Endothelial cell of umbilical vein (primary cell): ENCODE measurements at regions of chr9 and their contacts with region 1.

Region 1: GRCh38 chr9:77884395-77884851 is 147.2 kb downstream of the GNAQ start:
- DNase-seq: no peak
- H3K4me3 ChIP-seq: no peak overlapping the region
- H3K27ac ChIP-seq: no peak overlapping the region
- H3K4me1 ChIP-seq: peaks cover 4% of the 10 kb centered on the region
- H3K27me3 ChIP-seq: no peaks in the 10 kb centered on the region
- CTCF ChIP-seq: no peak
- POLR2A ChIP-seq: no peak

Region 2: DNA sequence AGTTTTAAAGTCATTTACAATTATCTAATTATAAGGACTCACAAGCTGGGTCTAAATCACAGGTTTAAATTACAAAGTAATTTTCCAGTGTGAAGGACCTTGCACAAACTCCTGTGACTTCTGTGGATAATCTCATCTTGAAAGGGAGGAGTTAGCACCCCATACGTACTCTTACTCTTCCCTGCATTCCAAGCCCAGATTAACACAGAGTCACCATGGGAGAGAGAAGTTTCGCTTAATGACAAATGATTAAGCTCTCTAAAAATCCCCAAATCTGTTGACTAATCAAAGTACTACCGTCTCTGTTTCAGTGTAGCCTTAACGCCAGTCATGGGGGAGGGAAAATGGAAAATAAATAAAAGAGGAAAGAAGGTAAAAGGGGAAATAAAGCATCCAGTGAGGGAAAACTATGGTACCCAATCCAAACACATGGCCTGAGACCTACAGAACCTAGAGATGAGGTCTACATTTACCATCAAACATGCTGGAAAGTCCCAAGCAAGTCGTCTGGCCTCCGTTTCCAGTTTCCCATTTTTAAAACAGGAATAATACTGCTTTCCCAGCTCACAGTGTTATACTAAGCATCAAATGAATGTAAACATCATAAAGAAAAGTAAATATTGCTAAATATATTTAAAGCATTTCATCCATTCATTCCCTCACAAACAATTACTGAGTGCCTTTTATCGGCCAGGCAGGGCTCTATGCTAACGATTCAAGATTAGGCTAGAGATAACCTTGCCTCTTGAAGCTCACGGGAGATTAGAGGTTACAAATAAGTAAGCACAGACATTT is 1056.9 kb before region 1 on chr9:
- CTCF ChIA-PET with region 1: no interaction called
- POLR2A ChIA-PET with region 1: no interaction called
- dilution Hi-C with region 1: no loop called
- intact Hi-C with region 1: no loop called
- DNase-seq: no peak
- H3K4me3 ChIP-seq: no peak overlapping the region
- H3K27ac ChIP-seq: no peak overlapping the region
- H3K4me1 ChIP-seq: no peaks in the 10 kb centered on the region
- H3K27me3 ChIP-seq: peaks cover 2 to 3% of the 10 kb centered on the region in 2 experiments
- CTCF ChIP-seq: no peak
- POLR2A ChIP-seq: no peak

Region 3: GRCh38 chr9:77769246-77769645 is 115.2 kb before region 1 on chr9:
- CTCF ChIA-PET with region 1: no interaction called
- POLR2A ChIA-PET with region 1: no interaction called
- dilution Hi-C with region 1: no loop called
- intact Hi-C with region 1: no loop called
- DNase-seq: peak; percentile 80
- H3K4me3 ChIP-seq: no peak overlapping the region
- H3K27ac ChIP-seq: peak overlapping the region; percentile 54
- H3K4me1 ChIP-seq: peaks cover 17% of the 10 kb centered on the region
- H3K27me3 ChIP-seq: no peaks in the 10 kb centered on the region
- CTCF ChIP-seq: no peak
- POLR2A ChIP-seq: no peak

Region 4: GRCh38 chr9:77896938-77897667 is 12.7 kb after region 1 on chr9:
- CTCF ChIA-PET with region 1: interaction called, 15 read pairs
- POLR2A ChIA-PET with region 1: no interaction called
- dilution Hi-C with region 1: no loop called
- intact Hi-C with region 1: no loop called
- DNase-seq: peak; percentile 52
- H3K4me3 ChIP-seq: no peak overlapping the region
- H3K27ac ChIP-seq: no peak overlapping the region
- H3K4me1 ChIP-seq: peaks cover 12% of the 10 kb centered on the region
- H3K27me3 ChIP-seq: no peaks in the 10 kb centered on the region
- CTCF ChIP-seq: peak; percentile 18 to 40
- POLR2A ChIP-seq: no peak

Region 5: DNA sequence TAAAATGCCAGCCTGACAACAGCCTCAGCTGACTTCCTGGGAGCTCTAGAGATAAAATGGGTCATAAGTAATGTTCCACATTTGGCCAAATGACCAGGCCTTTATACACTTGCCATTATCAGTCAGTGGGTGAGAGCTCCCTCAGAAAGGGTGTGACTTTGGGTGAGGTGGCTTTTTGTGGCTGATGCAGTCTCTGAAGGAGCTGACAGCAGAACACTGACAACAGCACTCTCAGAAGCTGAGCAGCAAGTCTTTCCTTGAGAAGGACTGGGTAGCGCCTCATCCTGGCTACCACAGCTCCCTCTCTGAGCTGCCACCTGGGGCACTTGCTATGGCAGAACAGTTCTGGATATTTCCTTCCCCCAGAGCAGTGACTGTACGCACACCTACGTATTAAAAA is 169.2 kb after region 1 on chr9:
- CTCF ChIA-PET with region 1: no interaction called
- POLR2A ChIA-PET with region 1: no interaction called
- dilution Hi-C with region 1: no loop called
- intact Hi-C with region 1: no loop called
- DNase-seq: no peak
- H3K4me3 ChIP-seq: no peak overlapping the region
- H3K27ac ChIP-seq: no peak overlapping the region
- H3K4me1 ChIP-seq: no peaks in the 10 kb centered on the region
- H3K27me3 ChIP-seq: peaks cover 0 to 3% of the 10 kb centered on the region in 2 experiments
- CTCF ChIP-seq: no peak
- POLR2A ChIP-seq: no peak